Caco-2 (cell line): ENCODE measurements at regions of chr12 and their contacts with region 1.

Region 1: DNA sequence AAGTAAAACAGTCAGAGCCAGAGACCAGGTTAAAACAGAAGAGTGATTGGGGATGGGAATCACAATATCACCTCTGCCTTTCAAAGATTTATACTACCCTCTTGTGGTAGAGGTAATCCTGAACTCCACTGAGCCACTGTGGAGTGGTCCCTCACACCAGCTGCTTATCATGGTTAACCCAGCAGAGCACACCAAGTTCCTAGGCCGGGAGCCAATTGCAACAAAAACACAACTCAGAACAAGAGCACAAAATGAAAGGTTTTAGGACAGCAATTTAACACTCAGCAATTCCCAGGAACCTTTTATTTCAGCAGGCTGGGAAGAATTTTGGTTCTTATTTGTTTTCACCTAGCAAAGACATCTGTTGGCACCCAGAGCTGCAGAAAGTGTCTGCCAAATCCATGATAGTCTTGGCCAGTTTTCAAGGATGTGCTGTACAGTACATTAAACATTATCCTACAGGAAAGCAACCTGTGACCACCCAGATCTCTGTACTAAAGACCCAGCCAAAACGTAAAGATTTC is 220.5 kb upstream of the ATXN7L3B start:
- DNase-seq: peak in 1 of 2 experiments; percentile 42
- H3K4me3 ChIP-seq: no peak overlapping the region
- H3K4me3 Mint-ChIP-seq: no peak overlapping the region
- H3K27ac Mint-ChIP-seq: no peak overlapping the region
- H3K4me1 ChIP-seq: no peaks in the 10 kb centered on the region
- H3K4me1 Mint-ChIP-seq: no peaks in the 10 kb centered on the region
- H3K27me3 ChIP-seq: no peaks in the 10 kb centered on the region
- H3K27me3 Mint-ChIP-seq: no peaks in the 10 kb centered on the region
- CTCF ChIP-seq: peak; percentile 44 to 54

Region 2: DNA sequence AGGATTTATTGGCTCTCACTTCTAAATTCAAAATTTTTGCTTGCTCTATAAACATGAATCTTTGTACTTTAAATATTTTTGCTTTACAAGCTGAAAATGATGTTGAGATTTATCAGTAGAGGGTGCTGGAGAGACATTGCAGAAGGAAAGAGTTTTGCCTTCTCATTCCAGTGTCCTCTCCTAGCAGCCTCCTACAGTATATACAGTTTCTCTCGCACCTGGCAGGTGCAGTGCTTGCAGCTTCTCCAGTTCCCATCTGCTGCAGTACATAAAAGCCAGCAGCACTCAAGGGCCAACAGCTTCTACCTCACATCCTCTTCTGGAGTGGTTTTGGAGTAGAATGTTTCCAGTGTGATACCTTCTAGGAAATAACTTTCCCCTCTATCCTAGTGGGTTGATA is 381.3 kb before region 1 on chr12:
- CTCF ChIA-PET with region 1: no interaction called
- POLR2A ChIA-PET with region 1: no interaction called
- intact Hi-C with region 1: loop called (anchors 1 kb)
- DNase-seq: peak in 1 of 2 experiments; percentile 22
- H3K4me3 ChIP-seq: no peak overlapping the region
- H3K4me3 Mint-ChIP-seq: no peak overlapping the region
- H3K27ac Mint-ChIP-seq: no peak overlapping the region
- H3K4me1 ChIP-seq: no peaks in the 10 kb centered on the region
- H3K4me1 Mint-ChIP-seq: no peaks in the 10 kb centered on the region
- H3K27me3 ChIP-seq: no peaks in the 10 kb centered on the region
- H3K27me3 Mint-ChIP-seq: no peaks in the 10 kb centered on the region
- CTCF ChIP-seq: peak; percentile 48 to 54

Region 3: GRCh38 chr12:74365178-74365964 is 48.2 kb after region 1 on chr12:
- CTCF ChIA-PET with region 1: no interaction called
- POLR2A ChIA-PET with region 1: no interaction called
- intact Hi-C with region 1: loop called (anchors 1 kb)
- DNase-seq: peak; percentile 44 to 60
- H3K4me3 ChIP-seq: no peak overlapping the region
- H3K4me3 Mint-ChIP-seq: no peak overlapping the region
- H3K27ac Mint-ChIP-seq: no peak overlapping the region
- H3K4me1 ChIP-seq: no peaks in the 10 kb centered on the region
- H3K4me1 Mint-ChIP-seq: no peaks in the 10 kb centered on the region
- H3K27me3 ChIP-seq: no peaks in the 10 kb centered on the region
- H3K27me3 Mint-ChIP-seq: no peaks in the 10 kb centered on the region
- CTCF ChIP-seq: peak; percentile 34 to 43

Region 4: DNA sequence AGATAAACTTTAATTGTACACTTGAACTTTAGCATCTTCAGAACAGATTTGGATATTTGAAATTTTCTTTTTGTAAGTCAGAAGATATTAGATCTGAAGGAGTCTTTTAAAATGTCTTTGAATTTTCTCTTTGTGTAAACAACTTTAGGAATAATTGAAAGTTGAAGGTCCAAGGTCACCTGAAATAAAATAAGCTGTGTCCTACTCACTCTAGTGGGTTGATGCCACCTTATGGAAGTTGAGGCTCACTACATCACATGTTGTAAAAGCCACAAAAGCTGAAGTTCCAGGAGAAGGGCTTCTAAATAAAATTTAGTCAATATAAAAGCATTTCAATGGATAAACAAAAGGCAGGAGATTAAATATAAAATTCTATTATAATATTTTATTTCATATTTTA is 98.5 kb after region 1 on chr12:
- CTCF ChIA-PET with region 1: no interaction called
- POLR2A ChIA-PET with region 1: no interaction called
- intact Hi-C with region 1: loop called (anchors 2 kb)
- DNase-seq: peak in 1 of 2 experiments; percentile 23
- H3K4me3 ChIP-seq: no peak overlapping the region
- H3K4me3 Mint-ChIP-seq: no peak overlapping the region
- H3K27ac Mint-ChIP-seq: no peak overlapping the region
- H3K4me1 ChIP-seq: no peaks in the 10 kb centered on the region
- H3K4me1 Mint-ChIP-seq: no peaks in the 10 kb centered on the region
- H3K27me3 ChIP-seq: no peaks in the 10 kb centered on the region
- H3K27me3 Mint-ChIP-seq: no peaks in the 10 kb centered on the region
- CTCF ChIP-seq: peak; percentile 24 to 55

Region 5: DNA sequence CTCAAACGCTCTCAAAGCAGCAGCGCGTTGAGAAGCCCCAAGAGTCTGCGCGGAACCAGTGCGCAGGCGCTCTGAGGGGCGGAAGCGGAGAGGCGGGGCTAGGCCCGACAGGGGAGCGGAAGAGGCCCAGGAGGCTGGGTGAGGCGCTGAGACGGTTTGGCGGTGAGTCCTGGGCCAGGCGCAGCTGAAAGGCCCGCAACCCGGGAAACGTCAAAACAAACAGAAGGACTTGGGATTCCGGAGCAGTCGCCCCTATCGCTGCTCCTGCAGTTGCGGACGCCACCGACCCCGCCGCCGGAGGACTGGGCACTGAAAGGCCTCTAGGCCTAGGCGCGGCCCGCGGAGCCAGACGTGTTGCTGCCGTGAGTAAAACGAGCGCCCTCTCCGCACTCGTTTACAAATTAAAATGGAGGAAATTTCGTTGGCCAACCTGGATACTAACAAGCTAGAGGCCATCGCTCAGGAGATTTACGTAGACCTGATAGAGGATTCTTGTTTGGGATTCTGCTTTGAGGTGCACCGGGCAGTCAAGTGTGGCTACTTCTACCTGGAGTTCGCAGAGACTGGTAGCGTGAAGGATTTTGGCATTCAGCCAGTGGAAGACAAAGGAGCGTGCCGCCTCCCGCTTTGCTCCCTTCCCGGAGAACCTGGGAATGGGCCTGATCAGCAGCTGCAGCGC is 220.7 kb after region 1 on chr12 and contains the start of gene ATXN7L3B:
- CTCF ChIA-PET with region 1: no interaction called
- POLR2A ChIA-PET with region 1: no interaction called
- intact Hi-C with region 1: loop called (anchors 5 kb)
- DNase-seq: peak; percentile 94
- H3K4me3 ChIP-seq: peak within 1 kb of the TSS; percentile 86
- H3K4me3 Mint-ChIP-seq: peak within 1 kb of the TSS; percentile 98
- H3K27ac Mint-ChIP-seq: peak within 1 kb of the TSS; percentile 99
- H3K4me1 ChIP-seq: peaks cover 7% of the 10 kb centered on the region; the same call in 1 of the 2 replicates
- H3K4me1 Mint-ChIP-seq: peaks cover 18% of the 10 kb centered on the region
- H3K27me3 ChIP-seq: no peaks in the 10 kb centered on the region
- H3K27me3 Mint-ChIP-seq: no peaks in the 10 kb centered on the region
- CTCF ChIP-seq: no peak
- total RNA-seq, gene ATXN7L3B: 29.3 and 30.6 TPM in 2 replicates